Psoas muscle (tissue), 8 donors: ENCODE measurements at regions of chr4 and their contacts with region 1.

Region 1: GRCh38 chr4:141195095-141195707 is 25.5 kb upstream of the ZNF330 start:
- DNase-seq: no peak
- ATAC-seq: peak in 3 of 4 donors; percentile 64 to 80 (median 72)
- H3K4me3 ChIP-seq: no peak overlapping the region
- H3K27ac ChIP-seq: no peak overlapping the region
- H3K4me1 ChIP-seq: peaks cover 34% of the 10 kb centered on the region
- H3K27me3 ChIP-seq: no peaks in the 10 kb centered on the region
- CTCF ChIP-seq: no peak

Region 2: DNA sequence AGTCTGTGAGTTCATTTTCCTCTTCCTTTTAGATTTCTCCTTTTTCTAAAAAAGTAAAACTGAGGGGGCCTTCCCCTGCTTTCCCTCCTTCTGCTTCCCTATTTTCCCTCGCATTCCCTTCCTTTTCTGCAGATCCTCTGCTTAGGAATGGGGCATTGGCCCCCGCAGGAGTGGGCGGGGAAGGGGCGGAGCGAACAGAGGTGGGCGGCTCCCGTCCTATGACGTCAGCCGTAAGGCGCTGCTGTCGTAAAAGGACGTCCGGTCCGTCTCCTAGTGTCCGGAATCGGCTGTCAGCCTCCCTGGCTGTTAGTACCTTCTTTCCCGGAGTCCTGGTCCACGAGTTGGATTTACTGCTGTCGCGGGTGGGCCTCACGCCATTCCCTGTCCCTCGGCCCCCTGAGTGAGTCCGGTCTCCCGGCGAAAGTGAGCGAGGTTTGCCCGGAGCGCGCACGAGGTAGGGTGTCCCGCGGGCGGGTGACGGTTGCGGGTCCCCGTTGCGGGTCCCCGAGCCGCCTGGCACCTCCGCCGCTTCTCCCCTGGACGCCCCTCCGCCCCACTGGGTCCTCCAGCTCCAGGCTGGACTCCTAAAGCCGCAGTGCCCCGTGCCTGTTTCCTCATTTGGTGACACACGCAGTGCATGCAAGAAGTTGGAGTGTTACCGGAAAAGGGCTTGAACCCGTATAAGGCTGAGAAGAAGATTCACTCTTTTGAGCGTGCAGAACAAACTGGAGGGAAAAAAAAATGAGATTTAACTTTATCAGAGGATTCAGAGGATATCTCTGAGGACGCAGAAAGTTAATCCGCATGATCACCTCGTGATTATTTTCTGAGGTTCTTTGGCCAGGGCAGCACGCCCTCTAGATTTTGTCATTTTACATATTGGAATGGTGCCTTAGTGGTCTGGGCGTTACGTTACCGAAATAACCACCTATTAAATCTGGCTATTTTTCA is 25.7 kb after region 1 on chr4 and contains the start of gene ZNF330:
- intact Hi-C with region 1: loop called in 1 of 2 experiments (anchors 2 kb)
- DNase-seq: peak; percentile 94 to 97
- ATAC-seq: peak; percentile 96 to 98 (median 98)
- H3K4me3 ChIP-seq: peak within 1 kb of the TSS; percentile 82
- H3K27ac ChIP-seq: peak within 1 kb of the TSS; percentile 98
- H3K4me1 ChIP-seq: peaks cover 21% of the 10 kb centered on the region
- H3K27me3 ChIP-seq: no peaks in the 10 kb centered on the region
- CTCF ChIP-seq: peak; percentile 19
- total RNA-seq, gene ZNF330: 43.7 to 65.0 (median 47.6) TPM